ENCODE measurements at regions of chr14 and their contacts with region 1.

Region 1: GRCh38 chr14:20454516-20455354 is at the starts of genes APEX1 and OSGEP:
- DNase-seq: peak; percentile 94 to 100 (median 97)
- ATAC-seq: peak; percentile 77
- H3K4me3 ChIP-seq: peak within 1 kb of the TSS; percentile 66
- H3K4me3 Mint-ChIP-seq: no peak within 1 kb of the TSS
- H3K27ac ChIP-seq: peak within 1 kb of the TSS; percentile 92 to 97
- H3K27ac Mint-ChIP-seq: no peak within 1 kb of the TSS
- H3K4me1 ChIP-seq: peaks cover 37% of the 10 kb centered on the region
- H3K4me1 Mint-ChIP-seq: peaks cover 6% of the 10 kb centered on the region
- H3K27me3 ChIP-seq: no peaks in the 10 kb centered on the region
- H3K27me3 Mint-ChIP-seq: no peaks in the 10 kb centered on the region
- CTCF ChIP-seq: no peak
- total RNA-seq, gene APEX1: 125 to 127 TPM
- total RNA-seq, gene OSGEP: 49.2 to 52.9 TPM

Region 2: DNA sequence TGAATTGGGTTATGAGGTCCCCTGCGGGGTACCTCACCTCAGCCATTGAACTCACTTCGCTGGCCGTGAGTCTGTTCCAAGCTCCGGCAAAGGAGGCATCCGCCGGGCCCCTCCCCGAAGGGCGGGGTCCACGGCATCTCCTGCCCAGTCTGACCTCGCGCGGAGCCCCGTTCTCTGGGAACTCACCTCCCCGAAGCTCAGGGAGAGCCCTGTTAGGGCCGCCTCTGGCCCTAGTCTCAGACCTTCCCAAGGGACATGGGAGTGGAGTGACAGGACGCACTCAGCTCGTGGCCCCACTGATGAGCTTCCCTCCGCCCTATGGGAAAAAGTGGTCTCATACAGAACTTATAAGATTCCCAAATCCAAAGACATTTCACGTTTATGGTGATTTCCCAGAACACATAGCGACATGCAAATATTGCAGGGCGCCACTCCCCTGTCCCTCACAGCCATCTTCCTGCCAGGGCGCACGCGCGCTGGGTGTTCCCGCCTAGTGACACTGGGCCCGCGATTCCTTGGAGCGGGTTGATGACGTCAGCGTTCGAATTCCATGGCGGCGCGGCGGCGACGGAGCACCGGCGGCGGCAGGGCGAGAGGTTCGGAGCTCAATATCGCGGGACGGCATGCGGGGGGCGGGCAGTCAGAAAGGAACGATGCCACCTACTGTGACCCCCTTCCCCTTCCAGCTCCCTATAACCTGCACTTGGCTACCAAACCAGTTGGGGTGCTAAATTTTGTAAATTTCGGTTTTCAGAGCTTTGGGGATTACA is 111.5 kb before region 1 on chr14 and contains the start of gene PARP2:
- CTCF ChIA-PET with region 1: interaction called, 4 read pairs
- POLR2A ChIA-PET with region 1: interaction called, 20 read pairs
- intact Hi-C with region 1: loop called in 1 of 2 experiments (anchors 5 kb)
- DNase-seq: peak; percentile 70 to 97 (median 82)
- ATAC-seq: peak; percentile 81
- H3K4me3 ChIP-seq: peak within 1 kb of the TSS; percentile 83
- H3K4me3 Mint-ChIP-seq: peak within 1 kb of the TSS; percentile 99
- H3K27ac ChIP-seq: peak within 1 kb of the TSS; percentile 92 to 95
- H3K27ac Mint-ChIP-seq: peak within 1 kb of the TSS; percentile 97
- H3K4me1 ChIP-seq: no peaks in the 10 kb centered on the region
- H3K4me1 Mint-ChIP-seq: peaks cover 11% of the 10 kb centered on the region
- H3K27me3 ChIP-seq: no peaks in the 10 kb centered on the region
- H3K27me3 Mint-ChIP-seq: no peaks in the 10 kb centered on the region
- CTCF ChIP-seq: no peak
- total RNA-seq, gene PARP2: 16.3 to 20.4 TPM

Region 3: DNA sequence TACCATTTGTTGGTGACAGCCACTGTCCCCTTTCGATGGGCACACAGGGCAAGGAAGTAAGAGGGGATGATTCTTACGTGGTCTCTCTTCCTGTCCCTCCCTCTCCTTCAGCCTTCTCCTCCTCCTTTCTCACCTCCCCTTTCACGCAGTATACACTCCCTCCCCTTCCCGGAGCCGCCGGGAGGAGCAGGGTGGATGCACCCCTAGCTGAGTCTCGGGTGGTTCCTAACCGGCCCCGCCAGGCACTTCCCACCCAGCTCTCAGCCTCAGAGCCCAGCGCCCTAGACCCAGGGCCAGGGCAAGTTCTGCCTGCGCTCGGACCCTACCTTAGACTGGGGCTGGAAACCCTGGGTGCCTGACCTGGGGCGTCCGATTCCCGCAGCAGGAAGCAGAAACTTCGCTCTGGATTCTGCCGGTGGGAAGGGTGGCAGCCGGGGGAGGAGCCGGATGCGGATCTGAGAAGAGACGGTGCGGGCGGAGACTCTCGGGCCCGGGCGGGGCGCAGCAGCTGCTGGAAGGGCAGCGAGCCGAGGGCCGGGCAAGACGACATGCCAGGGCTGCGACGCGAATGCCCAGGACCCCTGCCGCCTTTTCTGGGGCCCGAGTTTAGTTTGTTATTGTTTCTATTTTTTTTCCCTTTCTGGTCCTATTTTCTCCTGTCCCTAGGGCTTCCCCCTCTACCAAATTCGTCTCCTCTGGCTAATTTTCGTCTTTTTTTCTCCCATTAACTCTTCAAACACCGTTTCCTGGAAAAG is 41.5 kb before region 1 on chr14 and contains the start of gene TEP1:
- CTCF ChIA-PET with region 1: interaction called, 5 read pairs
- POLR2A ChIA-PET with region 1: interaction called, 26 read pairs
- intact Hi-C with region 1: loop called (anchors 2 to 5 kb)
- DNase-seq: peak; percentile 47 to 81 (median 66)
- ATAC-seq: peak; percentile 72
- H3K4me3 ChIP-seq: peak within 1 kb of the TSS; percentile 96
- H3K4me3 Mint-ChIP-seq: peak within 1 kb of the TSS; percentile 98
- H3K27ac ChIP-seq: peak within 1 kb of the TSS; percentile 80 to 90
- H3K27ac Mint-ChIP-seq: peak within 1 kb of the TSS; percentile 80
- H3K4me1 ChIP-seq: peaks cover 19% of the 10 kb centered on the region
- H3K4me1 Mint-ChIP-seq: peaks cover 49% of the 10 kb centered on the region
- H3K27me3 ChIP-seq: no peaks in the 10 kb centered on the region
- H3K27me3 Mint-ChIP-seq: no peaks in the 10 kb centered on the region
- CTCF ChIP-seq: no peak
- total RNA-seq, gene TEP1: 14.3 to 17.4 TPM

Region 4: DNA sequence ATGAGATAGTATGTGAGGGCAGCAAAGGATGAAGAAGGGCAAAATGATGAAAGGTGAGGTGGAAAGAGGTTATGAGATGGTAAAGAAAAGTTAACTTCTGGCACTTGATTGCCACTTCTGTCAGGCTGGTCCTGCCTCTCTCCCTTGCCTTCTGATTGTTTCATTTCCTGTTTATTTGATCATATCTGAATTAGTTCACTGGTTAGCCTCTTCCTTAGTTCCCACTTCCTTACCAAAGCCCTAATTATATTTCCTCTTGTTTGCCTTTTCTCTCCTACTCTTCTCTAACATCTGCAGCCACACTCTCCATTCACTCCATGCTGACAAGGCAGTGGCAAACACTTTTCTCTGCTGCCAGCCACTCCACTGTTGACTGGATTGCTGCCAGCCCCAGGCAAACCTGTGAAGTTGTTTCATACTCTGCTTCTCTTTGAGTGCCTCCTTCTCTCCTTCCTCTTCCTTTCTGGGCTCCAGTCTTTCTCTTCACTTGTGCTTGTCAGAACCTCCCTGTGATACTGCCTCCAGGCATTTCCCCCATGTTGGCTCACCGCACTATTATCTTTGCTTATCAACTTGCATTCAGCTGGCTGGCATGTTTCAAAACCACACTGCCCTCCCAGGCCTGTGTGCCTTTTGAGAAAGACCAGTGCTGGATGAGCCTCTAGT is 22.6 kb after region 1 on chr14:
- CTCF ChIA-PET with region 1: no interaction called
- POLR2A ChIA-PET with region 1: interaction called, 22 read pairs
- intact Hi-C with region 1: no loop called
- DNase-seq: peak in 10 of 14 experiments; percentile 12 to 79 (median 36)
- ATAC-seq: peak; percentile 82
- H3K4me3 ChIP-seq: peak overlapping the region; percentile 21
- H3K4me3 Mint-ChIP-seq: peak overlapping the region; percentile 68
- H3K27ac ChIP-seq: peak overlapping the region; percentile 53 to 71
- H3K27ac Mint-ChIP-seq: peak overlapping the region; percentile 87
- H3K4me1 ChIP-seq: peaks cover 80% of the 10 kb centered on the region
- H3K4me1 Mint-ChIP-seq: peaks cover 91% of the 10 kb centered on the region
- H3K27me3 ChIP-seq: no peaks in the 10 kb centered on the region
- H3K27me3 Mint-ChIP-seq: no peaks in the 10 kb centered on the region
- CTCF ChIP-seq: no peak

Measured in CD4-positive, alpha-beta T cell (primary cell).